Posterior vena cava (tissue), 2 donors: ENCODE measurements at regions of chr3 and their contacts with region 1.

Region 1: GRCh38 chr3:58414538-58415197 is 19.0 kb downstream of the PDHB start:
- DNase-seq: no peak

Region 2: GRCh38 chr3:57596495-57597121 is 818.1 kb before region 1 on chr3:
- intact Hi-C with region 1: no loop called
- DNase-seq: peak; percentile 93

Region 3: GRCh38 chr3:58324391-58325390 is 90.0 kb before region 1 on chr3:
- intact Hi-C with region 1: loop called in 1 of 2 experiments (anchors 5 kb)
- DNase-seq: no peak

Region 4: GRCh38 chr3:58332575-58333188 is 82.0 kb before region 1 on chr3 and contains the start of gene PXK:
- intact Hi-C with region 1: loop called (anchors 5 kb)
- DNase-seq: peak; percentile 96
- total RNA-seq, gene PXK: 22.5 to 24.8 TPM